Calu3 (cell line): ENCODE measurements at regions of chr11 and their contacts with region 1.

Region 1: GRCh38 chr11:12485328-12485727 is 108.0 kb downstream of the PARVA start:
- DNase-seq: no peak
- H3K4me3 Mint-ChIP-seq: no peak overlapping the region
- H3K27ac Mint-ChIP-seq: no peak overlapping the region
- H3K4me1 Mint-ChIP-seq: no peaks in the 10 kb centered on the region
- H3K27me3 Mint-ChIP-seq: no peaks in the 10 kb centered on the region
- CTCF ChIP-seq: peak; percentile 61

Region 2: DNA sequence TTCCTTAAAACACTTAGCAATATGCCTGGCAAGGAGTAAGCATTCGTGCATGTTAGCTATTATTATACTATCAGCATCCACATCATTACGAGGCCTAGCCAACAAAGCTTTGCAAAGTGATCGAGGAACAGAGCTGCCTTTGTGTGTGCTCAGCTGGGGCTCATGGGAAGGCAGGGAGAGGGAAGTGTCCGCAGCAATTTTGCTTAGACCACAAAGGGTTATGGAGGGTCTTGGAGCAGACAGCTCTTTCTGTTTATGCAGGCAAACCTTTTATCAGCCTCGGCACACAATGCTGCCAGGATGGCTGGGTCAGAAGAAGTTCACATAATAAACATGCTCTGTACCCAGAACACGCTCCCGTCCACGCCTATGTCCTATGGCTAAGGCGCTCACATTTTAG is 466.0 kb before region 1 on chr11:
- CTCF ChIA-PET with region 1: no interaction called
- intact Hi-C with region 1: no loop called
- DNase-seq: peak; percentile 49
- H3K4me3 Mint-ChIP-seq: no peak overlapping the region
- H3K27ac Mint-ChIP-seq: no peak overlapping the region
- H3K4me1 Mint-ChIP-seq: peaks cover 19% of the 10 kb centered on the region
- H3K27me3 Mint-ChIP-seq: no peaks in the 10 kb centered on the region
- CTCF ChIP-seq: no peak

Region 3: GRCh38 chr11:12354750-12355545 is 130.4 kb before region 1 on chr11:
- CTCF ChIA-PET with region 1: interaction called, 10 read pairs
- intact Hi-C with region 1: no loop called
- DNase-seq: no peak
- H3K4me3 Mint-ChIP-seq: no peak overlapping the region
- H3K27ac Mint-ChIP-seq: no peak overlapping the region
- H3K4me1 Mint-ChIP-seq: peaks cover 29% of the 10 kb centered on the region
- H3K27me3 Mint-ChIP-seq: no peaks in the 10 kb centered on the region
- CTCF ChIP-seq: no peak

Region 4: GRCh38 chr11:12449961-12450715 is 35.2 kb before region 1 on chr11:
- CTCF ChIA-PET with region 1: no interaction called
- intact Hi-C with region 1: no loop called
- DNase-seq: no peak
- H3K4me3 Mint-ChIP-seq: no peak overlapping the region
- H3K27ac Mint-ChIP-seq: no peak overlapping the region
- H3K4me1 Mint-ChIP-seq: peaks cover 8% of the 10 kb centered on the region
- H3K27me3 Mint-ChIP-seq: no peaks in the 10 kb centered on the region
- CTCF ChIP-seq: no peak